ENCODE measurements at regions of chr20 and their contacts with region 1.

Region 1: GRCh38 chr20:38057351-38057972 is 23.9 kb downstream of the RPRD1B start:
- DNase-seq: peak; percentile 84
- H3K4me3 ChIP-seq: no peak overlapping the region
- H3K27ac ChIP-seq: peak overlapping the region; percentile 71
- H3K4me1 ChIP-seq: peaks cover 22% of the 10 kb centered on the region
- H3K27me3 ChIP-seq: no peaks in the 10 kb centered on the region
- CTCF ChIP-seq: peak; percentile 76 to 93
- POLR2A ChIP-seq: no peak

Region 2: DNA sequence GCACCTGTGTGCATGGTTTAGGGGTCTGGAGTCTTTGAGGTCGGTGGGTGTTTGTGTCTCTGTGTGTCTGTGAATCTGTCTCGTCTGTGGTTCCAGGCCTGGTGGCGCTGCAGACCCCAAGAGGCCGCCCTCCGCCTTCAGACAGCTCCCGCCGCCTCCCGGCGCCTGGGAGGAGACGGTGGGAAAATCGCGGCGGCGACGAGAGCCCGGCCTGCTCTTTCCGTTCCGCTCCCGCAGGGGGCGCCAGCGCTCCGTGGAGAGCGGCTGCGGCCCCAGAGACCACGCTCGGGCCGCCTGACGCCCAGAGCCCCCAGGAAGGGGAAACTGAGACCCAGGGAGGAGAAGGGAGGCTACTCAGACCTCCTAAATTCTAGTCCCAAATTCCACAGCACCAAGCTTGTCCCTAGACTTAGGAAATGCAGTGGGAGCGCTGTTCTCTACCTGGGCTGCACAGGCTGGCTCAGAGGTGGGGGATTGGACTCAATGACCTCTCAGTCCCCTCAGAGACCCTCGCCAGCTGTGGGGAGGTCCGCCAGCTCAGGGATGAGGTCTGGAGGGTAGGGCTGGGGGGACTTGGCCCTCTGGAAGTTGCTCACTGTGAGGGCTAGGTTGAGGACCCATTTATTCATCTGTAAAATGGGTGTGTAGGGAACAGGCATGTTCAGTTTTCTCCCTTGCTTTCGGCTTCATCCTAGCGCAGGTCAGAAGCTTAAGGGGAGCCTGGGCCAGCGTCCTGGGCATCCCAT is 492.9 kb before region 1 on chr20:
- CTCF ChIA-PET with region 1: interaction called, 7 read pairs
- POLR2A ChIA-PET with region 1: no interaction called
- dilution Hi-C with region 1: no loop called
- intact Hi-C with region 1: loop called (anchors 1 kb)
- DNase-seq: peak; percentile 35
- H3K4me3 ChIP-seq: no peak overlapping the region
- H3K27ac ChIP-seq: no peak overlapping the region
- H3K4me1 ChIP-seq: no peaks in the 10 kb centered on the region
- H3K27me3 ChIP-seq: peaks cover 14 to 22% of the 10 kb centered on the region in 2 experiments
- CTCF ChIP-seq: peak; percentile 89 to 97
- POLR2A ChIP-seq: no peak

Region 3: DNA sequence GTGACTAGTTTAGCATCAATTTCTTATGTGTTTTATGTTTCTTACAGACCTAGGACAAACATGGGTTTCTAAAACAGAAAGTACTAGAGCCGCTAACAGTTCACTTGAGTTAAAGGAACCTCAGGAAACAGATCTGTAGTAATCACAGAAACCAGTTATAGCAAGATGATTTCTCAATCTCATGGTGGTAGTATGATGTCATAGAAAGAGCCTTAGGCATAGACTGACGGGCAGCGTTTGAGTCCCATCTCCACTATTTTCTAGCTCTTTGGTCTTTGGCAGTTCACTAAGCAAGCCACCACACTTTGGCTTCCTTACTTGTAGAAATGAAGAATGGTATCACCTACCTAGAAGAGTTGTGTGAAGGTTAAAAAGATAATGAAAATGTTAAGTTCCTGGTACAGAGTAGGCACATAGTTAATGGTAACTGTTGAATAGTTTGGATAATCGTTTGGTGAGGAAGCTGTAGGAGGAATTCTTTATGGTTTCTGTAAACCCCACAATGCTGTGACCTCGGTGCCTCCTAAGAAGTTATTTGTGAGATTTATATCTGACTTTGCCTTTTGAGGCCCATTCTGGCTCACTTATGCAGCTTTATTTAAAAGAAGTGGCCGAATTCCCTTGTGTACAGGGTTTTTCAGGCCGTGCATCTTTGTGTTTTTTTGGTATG is 342.3 kb before region 1 on chr20:
- CTCF ChIA-PET with region 1: no interaction called
- POLR2A ChIA-PET with region 1: no interaction called
- dilution Hi-C with region 1: no loop called
- intact Hi-C with region 1: no loop called
- DNase-seq: no peak
- H3K4me3 ChIP-seq: no peak overlapping the region
- H3K27ac ChIP-seq: no peak overlapping the region
- H3K4me1 ChIP-seq: peaks cover 6% of the 10 kb centered on the region
- H3K27me3 ChIP-seq: no peaks in the 10 kb centered on the region
- CTCF ChIP-seq: no peak
- POLR2A ChIP-seq: no peak

Region 4: DNA sequence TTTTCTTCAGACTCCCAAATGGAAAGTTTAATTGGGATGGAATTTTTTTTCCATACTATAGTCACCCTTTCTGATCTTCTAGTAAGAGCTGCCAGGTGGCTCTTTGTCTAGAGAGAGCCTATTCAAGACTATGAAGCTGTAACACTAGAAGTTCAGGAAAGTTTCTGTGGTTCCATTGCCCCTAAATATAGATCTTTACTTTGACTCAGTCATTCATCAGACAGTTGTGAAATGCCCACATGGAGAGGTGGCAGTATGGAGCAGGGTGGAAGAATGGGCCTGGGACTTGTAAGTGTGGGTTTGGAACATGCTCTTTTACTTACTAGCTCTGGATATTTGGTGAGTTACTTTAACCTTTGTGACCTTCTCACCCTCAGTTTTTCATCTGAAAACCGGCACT is 275.8 kb before region 1 on chr20:
- CTCF ChIA-PET with region 1: no interaction called
- POLR2A ChIA-PET with region 1: no interaction called
- dilution Hi-C with region 1: no loop called
- intact Hi-C with region 1: no loop called
- DNase-seq: no peak
- H3K4me3 ChIP-seq: no peak overlapping the region
- H3K27ac ChIP-seq: no peak overlapping the region
- H3K4me1 ChIP-seq: no peaks in the 10 kb centered on the region
- H3K27me3 ChIP-seq: no peaks in the 10 kb centered on the region
- CTCF ChIP-seq: no peak
- POLR2A ChIP-seq: no peak

Region 5: DNA sequence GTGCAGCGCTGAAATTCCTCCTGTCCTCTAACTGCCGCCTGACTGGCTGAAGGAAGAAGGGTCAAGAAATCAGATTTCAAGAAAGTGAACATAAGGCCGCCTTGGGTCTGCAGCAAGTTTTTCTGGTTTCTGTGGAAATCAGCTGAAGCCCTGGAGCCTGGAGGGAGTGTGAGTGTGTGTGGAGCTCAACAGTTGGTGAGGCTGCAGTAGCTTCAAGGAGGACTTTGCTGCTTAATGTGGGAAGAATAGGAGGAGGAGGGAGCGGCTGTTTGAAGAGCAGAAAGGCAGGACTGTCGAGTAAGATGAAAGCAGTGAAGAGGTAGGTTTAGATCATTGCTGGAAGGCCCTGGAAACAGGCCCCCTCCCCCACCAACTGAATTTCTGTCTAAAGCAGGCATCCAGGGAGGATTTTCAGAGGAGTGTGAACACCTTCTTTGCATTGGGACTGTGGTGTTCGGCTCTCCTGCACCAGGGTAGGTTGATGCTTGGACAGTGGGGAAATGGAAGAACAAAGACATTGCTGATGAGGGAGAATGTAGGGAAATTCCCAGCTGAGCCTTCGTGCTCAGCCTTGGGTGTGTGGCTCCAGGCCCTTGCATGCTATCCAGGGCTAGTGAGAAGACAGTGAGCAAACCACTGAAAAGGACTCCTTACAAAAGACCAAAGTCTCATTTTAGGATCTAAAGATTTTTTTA is 234.0 kb before region 1 on chr20:
- CTCF ChIA-PET with region 1: no interaction called
- POLR2A ChIA-PET with region 1: no interaction called
- dilution Hi-C with region 1: no loop called
- intact Hi-C with region 1: no loop called
- DNase-seq: no peak
- H3K4me3 ChIP-seq: no peak overlapping the region
- H3K27ac ChIP-seq: no peak overlapping the region
- H3K4me1 ChIP-seq: no peaks in the 10 kb centered on the region
- H3K27me3 ChIP-seq: no peaks in the 10 kb centered on the region
- CTCF ChIP-seq: no peak
- POLR2A ChIP-seq: no peak

Region 6: GRCh38 chr20:37992802-37993409 is 64.6 kb before region 1 on chr20:
- CTCF ChIA-PET with region 1: no interaction called
- POLR2A ChIA-PET with region 1: no interaction called
- dilution Hi-C with region 1: no loop called
- intact Hi-C with region 1: no loop called
- DNase-seq: peak; percentile 15
- H3K4me3 ChIP-seq: no peak overlapping the region
- H3K27ac ChIP-seq: no peak overlapping the region
- H3K4me1 ChIP-seq: peaks cover 24% of the 10 kb centered on the region
- H3K27me3 ChIP-seq: no peaks in the 10 kb centered on the region
- CTCF ChIP-seq: peak; percentile 28 to 47
- POLR2A ChIP-seq: no peak

Region 7: GRCh38 chr20:38043512-38044300 is 13.8 kb before region 1 on chr20:
- CTCF ChIA-PET with region 1: interaction called, 13 read pairs
- POLR2A ChIA-PET with region 1: no interaction called
- dilution Hi-C with region 1: no loop called
- intact Hi-C with region 1: no loop called
- DNase-seq: peak; percentile 16
- H3K4me3 ChIP-seq: no peak overlapping the region
- H3K27ac ChIP-seq: no peak overlapping the region
- H3K4me1 ChIP-seq: no peaks in the 10 kb centered on the region
- H3K27me3 ChIP-seq: no peaks in the 10 kb centered on the region
- CTCF ChIP-seq: no peak
- POLR2A ChIP-seq: no peak

Region 8: GRCh38 chr20:38084400-38084951 is 27.0 kb after region 1 on chr20:
- CTCF ChIA-PET with region 1: interaction called, 10 read pairs
- POLR2A ChIA-PET with region 1: no interaction called
- dilution Hi-C with region 1: no loop called
- intact Hi-C with region 1: no loop called
- DNase-seq: peak; percentile 91
- H3K4me3 ChIP-seq: no peak overlapping the region
- H3K27ac ChIP-seq: peak overlapping the region; percentile 63
- H3K4me1 ChIP-seq: peaks cover 21% of the 10 kb centered on the region
- H3K27me3 ChIP-seq: no peaks in the 10 kb centered on the region
- CTCF ChIP-seq: no peak
- POLR2A ChIP-seq: no peak

Region 9: GRCh38 chr20:38143646-38144554 is 86.4 kb after region 1 on chr20:
- CTCF ChIA-PET with region 1: interaction called, 27 read pairs
- POLR2A ChIA-PET with region 1: no interaction called
- dilution Hi-C with region 1: no loop called
- intact Hi-C with region 1: no loop called
- DNase-seq: peak; percentile 96
- H3K4me3 ChIP-seq: no peak overlapping the region
- H3K27ac ChIP-seq: peak overlapping the region; percentile 93
- H3K4me1 ChIP-seq: peaks cover 87% of the 10 kb centered on the region
- H3K27me3 ChIP-seq: no peaks in the 10 kb centered on the region
- CTCF ChIP-seq: no peak
- POLR2A ChIP-seq: peak; percentile 69

Region 10: GRCh38 chr20:38158670-38159351 is 101.3 kb after region 1 on chr20:
- CTCF ChIA-PET with region 1: interaction called, 53 read pairs
- POLR2A ChIA-PET with region 1: interaction called, 3 read pairs
- dilution Hi-C with region 1: no loop called
- intact Hi-C with region 1: loop called (anchors 5 kb)
- DNase-seq: peak; percentile 99
- H3K4me3 ChIP-seq: no peak overlapping the region
- H3K27ac ChIP-seq: peak overlapping the region; percentile 96
- H3K4me1 ChIP-seq: peaks cover 89% of the 10 kb centered on the region
- H3K27me3 ChIP-seq: no peaks in the 10 kb centered on the region
- CTCF ChIP-seq: no peak
- POLR2A ChIP-seq: no peak

Region 11: GRCh38 chr20:38321959-38322598 is 264.6 kb after region 1 on chr20:
- CTCF ChIA-PET with region 1: interaction called, 5 read pairs
- POLR2A ChIA-PET with region 1: no interaction called
- dilution Hi-C with region 1: no loop called
- intact Hi-C with region 1: loop called (anchors 10 kb)
- DNase-seq: peak; percentile 69
- H3K4me3 ChIP-seq: no peak overlapping the region
- H3K27ac ChIP-seq: no peak overlapping the region
- H3K4me1 ChIP-seq: no peaks in the 10 kb centered on the region
- H3K27me3 ChIP-seq: peaks cover 2 to 5% of the 10 kb centered on the region in 2 experiments
- CTCF ChIP-seq: peak; percentile 66 to 69
- POLR2A ChIP-seq: no peak